GM10248 (cell line): ENCODE measurements at regions of chr17 and their contacts with region 1.

Region 1: GRCh38 chr17:78133971-78134898 is 3.7 kb downstream of the TMC8 start:
- DNase-seq: peak; percentile 72
- CTCF ChIP-seq: peak; percentile 72

Region 2: DNA sequence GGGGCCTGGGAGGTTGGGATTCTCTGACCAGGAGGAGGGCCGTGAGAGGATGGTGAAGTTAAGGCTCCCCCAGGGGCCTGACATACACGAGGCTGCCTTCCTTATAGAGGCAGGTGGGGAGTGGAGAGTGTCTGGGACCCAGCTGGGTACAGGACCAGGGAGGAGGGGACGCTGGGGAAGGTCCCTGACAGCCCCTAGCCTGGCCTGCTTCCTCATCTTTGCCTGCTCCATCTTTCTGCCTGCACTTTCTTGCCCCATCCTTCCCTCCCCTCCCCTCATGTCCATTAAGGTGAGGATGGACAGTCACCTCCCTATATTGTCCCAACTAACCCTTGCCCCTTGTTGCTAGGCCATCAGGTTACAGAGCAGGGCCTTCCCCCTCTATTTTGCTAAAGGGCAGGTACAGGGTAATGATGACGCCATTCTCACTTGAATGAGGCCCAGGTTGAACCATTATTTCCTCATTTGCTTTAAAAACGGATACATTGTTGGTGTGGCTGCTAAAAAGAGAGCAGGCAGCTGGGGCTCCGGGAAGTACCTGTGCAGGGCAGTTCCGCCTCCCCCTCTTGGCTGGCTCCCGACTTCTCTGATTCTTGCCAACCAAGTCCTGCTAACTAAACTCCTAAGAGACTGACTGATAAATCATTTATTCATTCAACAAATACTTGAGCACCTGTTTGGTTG is 13.2 kb after region 1 on chr17:
- CTCF ChIA-PET with region 1: interaction called, 22 read pairs
- POLR2A ChIA-PET with region 1: interaction called, 3 read pairs
- DNase-seq: peak; percentile 60
- CTCF ChIP-seq: no peak

Region 3: GRCh38 chr17:78159575-78160158 is 25.4 kb after region 1 on chr17:
- CTCF ChIA-PET with region 1: interaction called, 11 read pairs
- POLR2A ChIA-PET with region 1: interaction called, 6 read pairs
- DNase-seq: no peak
- CTCF ChIP-seq: no peak